ENCODE measurements at regions of chr22 and their contacts with region 1.

Region 1: GRCh38 chr22:24027389-24027975 is 16.4 kb downstream of the CABIN1 start:
- DNase-seq: no peak
- ATAC-seq: no peak
- H3K4me3 ChIP-seq: no peak overlapping the region
- H3K4me3 Mint-ChIP-seq: no peak overlapping the region
- H3K27ac ChIP-seq: no peak overlapping the region
- H3K27ac Mint-ChIP-seq: peak overlapping the region in 1 of 9 donors; percentile 72
- H3K4me1 ChIP-seq: peaks cover 0 to 8% of the 10 kb centered on the region in 2 donors
- H3K4me1 Mint-ChIP-seq: peaks cover 10 to 68% (median 57%) of the 10 kb centered on the region in 7 donors
- H3K27me3 ChIP-seq: no peaks in the 10 kb centered on the region
- H3K27me3 Mint-ChIP-seq: no peaks in the 10 kb centered on the region

Region 2: DNA sequence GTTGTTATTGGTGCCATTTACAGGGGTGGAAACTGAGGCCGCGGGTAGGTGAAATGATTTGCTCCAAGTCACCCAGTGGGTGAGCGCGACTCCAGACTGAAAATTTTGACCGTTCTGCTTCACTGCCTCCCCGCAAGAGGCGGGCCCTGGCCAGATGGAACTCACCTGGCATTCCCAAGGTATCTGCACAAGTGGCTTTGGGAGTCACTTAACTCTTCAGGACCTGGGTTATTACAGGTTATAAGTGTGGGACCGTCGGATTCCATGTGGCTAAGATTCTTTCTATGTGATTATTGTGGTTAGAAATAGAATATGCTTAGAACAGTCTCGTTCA is 15.8 kb before region 1 on chr22:
- CTCF ChIA-PET with region 1: interaction called, 4 read pairs
- POLR2A ChIA-PET with region 1: interaction called, 12 read pairs
- intact Hi-C with region 1: no loop called
- DNase-seq: peak in 2 of 9 donors; percentile 10 to 19
- ATAC-seq: no peak
- H3K4me3 ChIP-seq: peak overlapping the region; percentile 75
- H3K4me3 Mint-ChIP-seq: peak overlapping the region; percentile 88 to 98 (median 96)
- H3K27ac ChIP-seq: peak overlapping the region; percentile 78
- H3K27ac Mint-ChIP-seq: peak overlapping the region; percentile 93 to 99 (median 97)
- H3K4me1 ChIP-seq: peaks cover 4 to 10% of the 10 kb centered on the region in 2 donors
- H3K4me1 Mint-ChIP-seq: peaks cover 12 to 52% (median 39%) of the 10 kb centered on the region in 7 donors
- H3K27me3 ChIP-seq: no peaks in the 10 kb centered on the region
- H3K27me3 Mint-ChIP-seq: no peaks in the 10 kb centered on the region

Region 3: GRCh38 chr22:24140357-24140756 is 112.9 kb after region 1 on chr22:
- CTCF ChIA-PET with region 1: no interaction called
- POLR2A ChIA-PET with region 1: no interaction called
- intact Hi-C with region 1: no loop called
- DNase-seq: no peak
- ATAC-seq: peak; percentile 62
- H3K4me3 ChIP-seq: no peak overlapping the region
- H3K4me3 Mint-ChIP-seq: peak overlapping the region in 1 of 10 donors; percentile 40
- H3K27ac ChIP-seq: peak overlapping the region; percentile 3
- H3K27ac Mint-ChIP-seq: peak overlapping the region in 7 of 9 donors; percentile 14 to 82 (median 71)
- H3K4me1 ChIP-seq: peaks cover 26 to 48% of the 10 kb centered on the region in 2 donors
- H3K4me1 Mint-ChIP-seq: peaks cover 39 to 78% (median 70%) of the 10 kb centered on the region in 7 donors
- H3K27me3 ChIP-seq: no peaks in the 10 kb centered on the region
- H3K27me3 Mint-ChIP-seq: no peaks in the 10 kb centered on the region

Measured in naive thymus-derived CD4-positive, alpha-beta T cell (primary cell).